MCF 10A (cell line): ENCODE measurements at regions of chr15 and their contacts with region 1.

Region 1: DNA sequence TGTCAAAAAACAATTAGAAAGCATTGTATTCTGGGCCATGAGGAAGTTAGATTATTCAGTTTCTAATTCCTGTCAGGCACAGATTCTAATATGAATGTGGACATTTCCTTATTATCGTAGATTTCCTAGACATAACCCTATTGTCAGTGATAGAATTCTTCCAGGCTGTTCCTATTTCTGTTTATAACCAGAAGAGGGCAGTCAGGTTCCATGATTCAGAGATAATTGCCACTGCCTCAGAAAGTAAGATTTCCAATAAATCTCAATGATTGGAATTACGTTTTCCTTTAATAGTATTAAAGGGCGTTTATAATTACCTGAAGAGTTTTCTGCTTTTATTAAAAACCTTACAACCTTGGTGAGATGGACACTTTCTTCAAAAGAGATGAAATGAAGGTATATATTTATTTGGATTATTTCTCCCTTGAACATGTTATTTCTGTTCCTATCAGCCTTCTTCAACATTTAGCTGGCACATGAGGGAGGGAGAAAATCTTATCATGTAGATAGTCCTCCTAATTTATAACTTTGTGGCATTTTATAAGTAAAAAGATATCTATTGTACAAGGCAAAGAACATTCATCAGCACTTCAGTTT is 439.2 kb downstream of the MCTP2 start:
- DNase-seq: peak; percentile 64
- H3K4me3 Mint-ChIP-seq: no peak overlapping the region
- H3K27ac Mint-ChIP-seq: no peak overlapping the region
- H3K4me1 Mint-ChIP-seq: peaks cover 13% of the 10 kb centered on the region
- H3K27me3 Mint-ChIP-seq: no peaks in the 10 kb centered on the region
- CTCF ChIP-seq: peak; percentile 66

Region 2: GRCh38 chr15:94412979-94413746 is 257.4 kb before region 1 on chr15:
- CTCF ChIA-PET with region 1: interaction called, 6 read pairs
- POLR2A ChIA-PET with region 1: no interaction called
- intact Hi-C with region 1: loop called (anchors 10 kb)
- DNase-seq: peak; percentile 36
- H3K4me3 Mint-ChIP-seq: no peak overlapping the region
- H3K27ac Mint-ChIP-seq: no peak overlapping the region
- H3K4me1 Mint-ChIP-seq: no peaks in the 10 kb centered on the region
- H3K27me3 Mint-ChIP-seq: no peaks in the 10 kb centered on the region
- CTCF ChIP-seq: peak; percentile 52

Region 3: DNA sequence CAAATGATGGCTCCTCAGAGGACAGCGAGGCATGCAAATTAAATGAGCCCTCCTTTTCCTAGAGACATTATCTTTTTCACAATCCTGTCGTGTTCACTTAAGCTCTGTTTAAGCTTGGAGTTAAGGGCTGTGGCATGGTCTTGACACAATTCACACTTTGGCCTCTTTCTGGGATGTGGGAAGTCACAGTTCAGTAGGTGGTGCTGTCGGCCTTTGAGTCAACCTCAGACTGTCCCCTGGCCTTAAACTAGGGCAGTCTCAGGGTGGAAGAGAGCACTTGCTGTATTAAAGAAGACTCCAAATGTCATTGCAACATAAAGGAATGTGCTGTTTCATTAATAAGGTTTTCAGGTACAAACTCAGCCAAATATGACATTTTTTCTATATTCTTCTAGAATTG is 88.2 kb before region 1 on chr15:
- CTCF ChIA-PET with region 1: interaction called, 4 read pairs
- POLR2A ChIA-PET with region 1: interaction called, 3 read pairs
- intact Hi-C with region 1: loop called (anchors 1 kb)
- DNase-seq: peak; percentile 62
- H3K4me3 Mint-ChIP-seq: no peak overlapping the region
- H3K27ac Mint-ChIP-seq: no peak overlapping the region
- H3K4me1 Mint-ChIP-seq: no peaks in the 10 kb centered on the region
- H3K27me3 Mint-ChIP-seq: no peaks in the 10 kb centered on the region
- CTCF ChIP-seq: peak; percentile 51

Region 4: DNA sequence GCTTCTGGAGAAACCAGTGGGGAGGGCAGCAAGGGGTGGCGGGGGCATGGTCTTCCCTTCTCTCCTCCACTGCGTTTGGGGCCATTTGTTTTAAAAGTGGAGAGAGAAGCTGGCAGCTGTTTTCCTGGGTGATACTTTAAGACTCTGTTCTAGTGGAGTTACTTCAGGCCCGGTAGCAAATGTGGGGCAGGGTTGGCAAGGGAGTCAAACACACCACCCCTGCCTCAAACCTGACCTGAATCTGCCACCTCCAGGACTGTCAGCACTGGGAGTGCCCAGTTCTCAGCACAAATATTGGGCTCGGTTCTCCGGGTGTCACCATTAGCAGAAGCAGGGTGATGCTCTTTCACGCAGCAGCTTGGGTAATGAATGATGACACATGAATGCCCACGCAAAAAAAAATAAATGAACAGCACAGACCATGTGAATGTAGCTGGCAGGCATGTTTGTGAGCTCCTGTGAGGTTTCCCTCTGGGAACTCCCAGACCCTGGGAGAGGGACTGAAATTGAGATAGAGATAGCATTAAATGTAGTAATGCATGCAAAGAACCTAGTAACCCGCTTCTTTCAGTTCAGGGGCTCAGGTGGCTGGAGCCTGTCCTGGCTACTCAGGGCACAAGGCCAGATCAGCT is 15.2 kb before region 1 on chr15:
- CTCF ChIA-PET with region 1: interaction called, 21 read pairs
- POLR2A ChIA-PET with region 1: no interaction called
- intact Hi-C with region 1: no loop called
- DNase-seq: no peak
- H3K4me3 Mint-ChIP-seq: no peak overlapping the region
- H3K27ac Mint-ChIP-seq: no peak overlapping the region
- H3K4me1 Mint-ChIP-seq: no peaks in the 10 kb centered on the region
- H3K27me3 Mint-ChIP-seq: peaks cover 14% of the 10 kb centered on the region
- CTCF ChIP-seq: no peak

Region 5: GRCh38 chr15:94793641-94794040 is 123.1 kb after region 1 on chr15:
- CTCF ChIA-PET with region 1: interaction called, 5 read pairs
- POLR2A ChIA-PET with region 1: interaction called, 12 read pairs
- intact Hi-C with region 1: loop called (anchors 2 kb)
- DNase-seq: peak; percentile 47
- H3K4me3 Mint-ChIP-seq: no peak overlapping the region
- H3K27ac Mint-ChIP-seq: no peak overlapping the region
- H3K4me1 Mint-ChIP-seq: peaks cover 35% of the 10 kb centered on the region
- H3K27me3 Mint-ChIP-seq: no peaks in the 10 kb centered on the region
- CTCF ChIP-seq: no peak

Region 6: GRCh38 chr15:94909489-94909888 is 239.0 kb after region 1 on chr15:
- CTCF ChIA-PET with region 1: no interaction called
- POLR2A ChIA-PET with region 1: interaction called, 3 read pairs
- intact Hi-C with region 1: loop called (anchors 5 kb)
- DNase-seq: peak; percentile 17
- H3K4me3 Mint-ChIP-seq: no peak overlapping the region
- H3K27ac Mint-ChIP-seq: no peak overlapping the region
- H3K4me1 Mint-ChIP-seq: no peaks in the 10 kb centered on the region
- H3K27me3 Mint-ChIP-seq: no peaks in the 10 kb centered on the region
- CTCF ChIP-seq: no peak

Region 7: GRCh38 chr15:95291898-95292472 is 621.4 kb after region 1 on chr15:
- CTCF ChIA-PET with region 1: interaction called, 8 read pairs
- POLR2A ChIA-PET with region 1: no interaction called
- intact Hi-C with region 1: loop called (anchors 1 kb)
- DNase-seq: peak; percentile 66
- H3K4me3 Mint-ChIP-seq: no peak overlapping the region
- H3K27ac Mint-ChIP-seq: no peak overlapping the region
- H3K4me1 Mint-ChIP-seq: peaks cover 6% of the 10 kb centered on the region
- H3K27me3 Mint-ChIP-seq: no peaks in the 10 kb centered on the region
- CTCF ChIP-seq: peak; percentile 45